Keratinocyte (primary cell): ENCODE measurements at regions of chr2 and their contacts with region 1.

Region 1: GRCh38 chr2:241479026-241479898 is 29.1 kb downstream of the STK25 start:
- DNase-seq: no peak
- H3K4me3 ChIP-seq: no peak overlapping the region
- H3K27ac ChIP-seq: no peak overlapping the region
- H3K4me1 ChIP-seq: no peaks in the 10 kb centered on the region
- H3K27me3 ChIP-seq: no peaks in the 10 kb centered on the region
- CTCF ChIP-seq: no peak

Region 2: DNA sequence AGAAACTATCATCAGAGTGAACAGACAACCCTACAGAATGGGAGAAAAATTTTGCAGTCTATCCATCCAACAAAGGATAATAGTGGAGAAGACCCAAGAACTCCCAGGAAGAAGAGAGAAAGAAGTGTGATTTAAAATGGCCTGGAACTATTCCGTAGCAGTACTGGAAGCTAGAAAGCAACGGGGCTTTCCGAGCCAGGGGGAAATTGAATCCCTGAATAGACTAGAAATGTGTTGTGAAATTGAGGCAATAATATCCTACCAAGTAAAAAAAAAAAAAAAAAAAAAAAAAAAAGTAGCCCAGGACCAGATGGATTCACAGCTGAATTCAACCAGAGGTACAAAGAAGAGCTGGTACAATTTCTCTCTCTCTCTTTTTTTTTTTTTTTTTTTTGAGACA is 53.9 kb before region 1 on chr2:
- dilution Hi-C with region 1: loop called (anchors 5 kb)
- DNase-seq: no peak
- H3K4me3 ChIP-seq: no peak overlapping the region
- H3K27ac ChIP-seq: no peak overlapping the region
- H3K4me1 ChIP-seq: no peaks in the 10 kb centered on the region
- H3K27me3 ChIP-seq: no peaks in the 10 kb centered on the region
- CTCF ChIP-seq: no peak